ENCODE measurements at regions of chr13 and their contacts with region 1.

Region 1: DNA sequence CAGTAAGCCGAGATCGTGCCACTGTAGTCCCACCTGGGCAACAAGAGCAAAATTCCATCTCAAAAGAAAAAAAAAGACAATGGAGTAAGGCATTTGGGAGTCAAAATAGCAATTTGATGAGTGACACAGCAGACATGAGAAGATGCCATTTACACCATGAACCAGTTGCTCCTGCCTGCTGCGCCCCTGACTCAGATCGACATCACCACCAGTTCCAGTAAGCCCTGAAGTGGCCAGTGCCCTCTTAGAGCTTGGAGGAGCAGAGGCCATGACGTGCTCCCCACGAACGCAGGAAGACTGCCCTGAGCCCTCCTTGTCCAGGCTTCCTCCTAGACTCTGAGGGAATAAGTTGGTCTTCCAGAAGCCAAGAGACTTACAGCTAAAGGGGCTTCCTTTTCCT is 339.2 kb downstream of the MYO16 start:
- DNase-seq: no peak
- H3K4me3 ChIP-seq: no peak overlapping the region
- H3K27ac ChIP-seq: no peak overlapping the region
- H3K4me1 ChIP-seq: no peaks in the 10 kb centered on the region
- H3K27me3 ChIP-seq: no peaks in the 10 kb centered on the region
- CTCF ChIP-seq: no peak

Region 2: DNA sequence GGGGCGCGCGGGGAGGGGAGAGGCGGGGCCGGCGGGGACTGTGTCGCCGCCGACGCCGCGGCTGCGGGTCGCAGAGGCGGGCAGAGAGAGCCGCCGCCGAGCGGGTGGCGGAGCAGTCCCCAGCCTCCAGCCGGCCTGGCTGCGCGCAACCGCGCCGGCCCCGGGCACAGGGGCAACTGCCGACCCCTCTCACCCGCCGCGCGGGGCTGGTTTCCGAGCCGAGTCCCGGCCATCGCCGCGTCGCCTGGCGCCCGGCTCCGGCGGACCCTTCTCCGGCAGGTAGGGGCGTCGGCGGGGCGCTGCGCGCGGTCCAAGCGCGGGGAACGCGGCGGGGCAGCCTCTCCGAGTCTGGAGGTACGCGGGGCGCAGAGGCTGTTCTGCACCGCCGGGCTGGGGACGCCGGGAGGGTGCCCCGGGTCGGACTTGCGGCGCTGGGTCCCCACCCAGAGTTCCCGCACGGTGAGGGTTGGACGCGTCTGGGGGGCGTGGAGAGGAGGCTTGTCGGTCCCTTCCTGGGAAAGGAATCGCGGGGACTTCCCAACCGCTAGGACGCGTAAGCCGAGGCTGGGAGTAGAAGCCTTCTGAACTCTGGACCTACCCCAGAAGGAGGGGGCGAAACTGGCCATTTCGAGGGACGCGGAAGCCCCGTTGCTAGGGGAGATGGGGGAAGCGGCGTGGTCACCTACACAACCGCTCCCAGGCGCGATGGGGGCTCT is 472.8 kb before region 1 on chr13:
- intact Hi-C with region 1: no loop called
- DNase-seq: peak; percentile 40 to 63 (median 49)
- H3K4me3 ChIP-seq: peak overlapping the region in 1 of 3 donors; percentile 26
- H3K27ac ChIP-seq: no peak overlapping the region
- H3K4me1 ChIP-seq: no peaks in the 10 kb centered on the region
- H3K27me3 ChIP-seq: peaks cover 2% of the 10 kb centered on the region
- CTCF ChIP-seq: no peak

Region 3: DNA sequence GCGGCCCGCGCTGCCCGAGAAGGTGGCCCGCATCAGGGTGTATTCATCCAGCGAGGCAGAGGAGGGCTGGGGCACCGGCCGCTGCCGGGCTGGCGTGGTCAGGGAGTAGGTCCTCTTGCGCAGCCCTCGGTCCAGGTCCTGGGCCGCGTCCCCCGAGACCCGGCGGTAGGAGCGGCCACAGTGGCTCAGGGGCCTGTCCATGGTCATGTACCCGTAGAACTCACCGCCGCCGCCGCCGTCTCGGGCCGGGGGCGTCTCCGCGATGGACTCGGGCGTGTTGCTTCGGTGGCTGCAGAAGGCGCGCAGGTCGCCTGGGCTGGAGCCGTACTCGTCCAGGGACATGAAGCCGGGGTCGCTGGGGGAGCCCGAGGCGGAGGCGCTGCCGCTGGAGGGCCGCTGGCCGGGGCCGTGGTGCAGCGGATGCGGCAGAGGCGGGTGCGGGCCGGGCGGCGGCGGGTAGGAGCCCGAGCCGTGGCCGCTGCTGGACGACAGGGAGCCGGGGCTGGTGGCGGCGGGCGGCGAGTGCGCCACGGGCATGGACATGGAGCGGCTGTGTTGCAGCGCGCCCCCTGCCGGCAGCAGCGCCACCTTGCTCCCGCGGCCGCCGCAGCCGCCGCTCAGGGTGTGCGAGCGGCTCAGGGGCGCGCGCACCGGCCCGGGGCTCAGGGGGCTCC is 815.8 kb after region 1 on chr13:
- intact Hi-C with region 1: loop called (anchors 5 kb)
- DNase-seq: peak; percentile 89 to 93 (median 91)
- H3K4me3 ChIP-seq: peak overlapping the region in 2 of 3 donors; percentile 3 to 51
- H3K27ac ChIP-seq: no peak overlapping the region
- H3K4me1 ChIP-seq: peaks cover 0 to 17% (median 5%) of the 10 kb centered on the region in 3 donors
- H3K27me3 ChIP-seq: no peaks in the 10 kb centered on the region
- CTCF ChIP-seq: peak; percentile 83

Measured in kidney (tissue), 22 donors.